ENCODE measurements at regions of chr13 and their contacts with region 1.

Region 1: GRCh38 chr13:33349986-33350826 is 64.7 kb upstream of the STARD13 start:
- DNase-seq: no peak
- H3K4me3 ChIP-seq: peak overlapping the region; percentile 71 to 95 (median 78)
- H3K27ac ChIP-seq: peak overlapping the region; percentile 88 to 93 (median 90)
- H3K4me1 ChIP-seq: peaks cover 7 to 50% (median 42%) of the 10 kb centered on the region in 4 donors
- H3K27me3 ChIP-seq: no peaks in the 10 kb centered on the region
- CTCF ChIP-seq: no peak
- EP300 ChIP-seq: no peak
- POLR2A ChIP-seq: no peak

Region 2: GRCh38 chr13:33153421-33154404 is 196.5 kb before region 1 on chr13:
- intact Hi-C with region 1: no loop called
- DNase-seq: no peak
- H3K4me3 ChIP-seq: no peak overlapping the region
- H3K27ac ChIP-seq: peak overlapping the region; percentile 49 to 70 (median 52)
- H3K4me1 ChIP-seq: peaks cover 4 to 66% (median 42%) of the 10 kb centered on the region in 4 donors
- H3K27me3 ChIP-seq: no peaks in the 10 kb centered on the region
- CTCF ChIP-seq: peak in 1 of 3 experiments; percentile 16
- EP300 ChIP-seq: no peak
- POLR2A ChIP-seq: no peak

Region 3: GRCh38 chr13:33249066-33249465 is 101.1 kb before region 1 on chr13:
- intact Hi-C with region 1: no loop called
- DNase-seq: no peak
- H3K4me3 ChIP-seq: no peak overlapping the region
- H3K27ac ChIP-seq: no peak overlapping the region
- H3K4me1 ChIP-seq: peaks cover 36 to 64% (median 57%) of the 10 kb centered on the region in 4 donors
- H3K27me3 ChIP-seq: no peaks in the 10 kb centered on the region
- CTCF ChIP-seq: no peak
- EP300 ChIP-seq: no peak
- POLR2A ChIP-seq: no peak

Region 4: GRCh38 chr13:33285420-33286124 is 64.6 kb before region 1 on chr13 and contains the start of gene STARD13:
- intact Hi-C with region 1: loop called (anchors 5 kb)
- DNase-seq: peak; percentile 99
- H3K4me3 ChIP-seq: peak within 1 kb of the TSS; percentile 68 to 77 (median 72)
- H3K27ac ChIP-seq: peak within 1 kb of the TSS; percentile 91 to 94 (median 92)
- H3K4me1 ChIP-seq: peaks cover 40 to 74% (median 63%) of the 10 kb centered on the region in 4 donors
- H3K27me3 ChIP-seq: no peaks in the 10 kb centered on the region
- CTCF ChIP-seq: peak in 2 of 3 experiments; percentile 53 to 56
- EP300 ChIP-seq: no peak
- POLR2A ChIP-seq: peak; percentile 83
- total RNA-seq, gene STARD13: 44.9 to 59.2 (median 56.2) TPM

Region 5: GRCh38 chr13:33542283-33543088 is 192.3 kb after region 1 on chr13:
- intact Hi-C with region 1: loop called (anchors 5 kb)
- DNase-seq: peak; percentile 100
- H3K4me3 ChIP-seq: peak overlapping the region; percentile 49 to 58 (median 57)
- H3K27ac ChIP-seq: peak overlapping the region; percentile 91 to 95 (median 92)
- H3K4me1 ChIP-seq: peaks cover 24 to 50% (median 40%) of the 10 kb centered on the region in 4 donors
- H3K27me3 ChIP-seq: no peaks in the 10 kb centered on the region
- CTCF ChIP-seq: peak; percentile 89 to 97 (median 90)
- EP300 ChIP-seq: peak; percentile 98
- POLR2A ChIP-seq: peak; percentile 16